H1 (cell line): ENCODE measurements at regions of chr7 and their contacts with region 1.

Region 1: GRCh38 chr7:128167042-128167691 is 73.9 kb upstream of the LEP start:
- DNase-seq: no peak
- H3K4me3 ChIP-seq: peak overlapping the region; percentile 31 to 87 (median 70)
- H3K27ac ChIP-seq: no peak overlapping the region
- H3K4me1 ChIP-seq: peaks cover 6 to 31% (median 20%) of the 10 kb centered on the region in 4 experiments
- H3K27me3 ChIP-seq: peaks cover 37 to 83% (median 67%) of the 10 kb centered on the region in 4 experiments
- CTCF ChIP-seq: no peak
- EP300 ChIP-seq: no peak
- POLR2A ChIP-seq: no peak
- RAD21 ChIP-seq: no peak

Region 2: GRCh38 chr7:128155100-128155740 is 11.9 kb before region 1 on chr7:
- CTCF ChIA-PET with region 1: interaction called, 19 read pairs
- POLR2A ChIA-PET with region 1: no interaction called
- DNase-seq: no peak
- H3K4me3 ChIP-seq: no peak overlapping the region
- H3K27ac ChIP-seq: no peak overlapping the region
- H3K4me1 ChIP-seq: peaks cover 8 to 11% (median 9%) of the 10 kb centered on the region in 4 experiments
- H3K27me3 ChIP-seq: peaks cover 0 to 2% (median 0%) of the 10 kb centered on the region in 4 experiments; a peak in 3 of 7 replicates
- CTCF ChIP-seq: no peak
- EP300 ChIP-seq: no peak
- POLR2A ChIP-seq: no peak
- RAD21 ChIP-seq: no peak

Region 3: GRCh38 chr7:128190051-128190647 is 23.0 kb after region 1 on chr7:
- CTCF ChIA-PET with region 1: interaction called, 4 read pairs
- POLR2A ChIA-PET with region 1: interaction called, 11 read pairs
- DNase-seq: peak in 1 of 2 experiments; percentile 34
- H3K4me3 ChIP-seq: no peak overlapping the region
- H3K27ac ChIP-seq: no peak overlapping the region
- H3K4me1 ChIP-seq: peaks cover 0 to 8% (median 2%) of the 10 kb centered on the region in 4 experiments; a peak in 3 of 7 replicates
- H3K27me3 ChIP-seq: no peaks in the 10 kb centered on the region; a peak in 2 of 7 replicates
- CTCF ChIP-seq: no peak
- EP300 ChIP-seq: no peak
- POLR2A ChIP-seq: no peak
- RAD21 ChIP-seq: no peak

Region 4: DNA sequence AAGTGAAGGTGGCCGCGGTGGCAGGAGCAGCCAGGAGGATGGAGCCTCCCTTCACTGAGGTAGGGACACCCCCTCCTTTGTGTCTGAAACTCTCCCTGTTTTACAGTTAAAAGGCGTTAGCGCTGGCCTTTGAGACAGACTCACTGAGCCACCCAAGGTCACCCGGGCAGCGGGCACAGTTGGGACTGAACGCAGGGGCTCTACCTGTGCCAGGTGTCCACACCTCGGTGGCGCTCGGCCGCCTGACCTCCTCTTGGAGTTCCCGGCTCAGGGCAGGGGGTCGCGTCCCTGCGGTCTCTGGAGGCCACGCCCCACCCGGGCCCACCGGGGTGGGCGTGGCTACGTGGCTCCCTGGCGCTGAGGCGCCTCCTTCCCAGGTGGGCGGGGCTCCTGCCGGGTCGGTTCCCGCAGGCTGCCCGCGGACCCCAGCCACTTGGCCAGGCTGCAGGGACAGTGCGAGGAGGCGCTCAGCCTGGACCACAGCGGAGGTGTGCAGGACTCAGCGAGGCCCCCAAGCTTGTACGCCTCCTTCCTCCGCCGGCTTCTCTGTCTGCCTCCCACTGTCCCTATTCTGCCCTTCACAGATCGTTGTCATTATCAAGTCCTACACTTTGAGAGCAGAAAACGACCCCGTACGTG is 34.0 kb after region 1 on chr7:
- CTCF ChIA-PET with region 1: interaction called, 131 read pairs
- POLR2A ChIA-PET with region 1: no interaction called
- DNase-seq: peak in 1 of 2 experiments; percentile 94
- H3K4me3 ChIP-seq: peak overlapping the region; percentile 52 to 71 (median 66)
- H3K27ac ChIP-seq: no peak overlapping the region
- H3K4me1 ChIP-seq: peaks cover 0 to 7% (median 6%) of the 10 kb centered on the region in 4 experiments; a peak in 6 of 7 replicates
- H3K27me3 ChIP-seq: peaks cover 15 to 47% (median 39%) of the 10 kb centered on the region in 4 experiments
- CTCF ChIP-seq: no peak
- EP300 ChIP-seq: no peak
- POLR2A ChIP-seq: no peak
- RAD21 ChIP-seq: no peak